Activated CD8-positive, alpha-beta T cell treated with anti-CD3 and anti-CD28 coated beads for 36 hours (primary cell): ENCODE measurements at regions of chr2 and their contacts with region 1.

Region 1: DNA sequence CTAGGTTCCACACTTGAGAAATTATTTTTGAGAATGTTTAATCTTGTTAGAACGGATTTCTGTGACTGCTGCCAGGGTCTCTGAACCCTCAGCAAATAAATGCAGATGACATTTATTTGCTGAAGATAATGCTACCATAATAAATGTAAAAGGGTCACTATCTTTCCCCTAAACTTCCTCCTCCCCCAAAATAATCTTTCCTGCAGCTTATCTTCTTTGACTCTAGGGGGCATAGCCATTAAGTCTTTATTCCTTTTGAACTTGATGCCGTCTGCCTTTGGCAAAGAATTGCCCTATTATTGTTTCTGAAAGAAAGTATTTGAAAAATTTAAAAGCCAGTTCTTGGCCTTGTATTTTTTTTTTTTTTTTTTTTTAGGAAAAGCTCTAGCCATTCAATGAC is 63.6 kb upstream of the ACSL3 start:
- DNase-seq: no peak
- ATAC-seq: peak; percentile 71
- H3K4me3 Mint-ChIP-seq: no peak overlapping the region
- H3K27ac Mint-ChIP-seq: no peak overlapping the region
- H3K4me1 Mint-ChIP-seq: no peaks in the 10 kb centered on the region
- H3K27me3 Mint-ChIP-seq: peaks cover 2% of the 10 kb centered on the region
- CTCF ChIP-seq: peak; percentile 58

Region 2: GRCh38 chr2:222813177-222813843 is 16.0 kb after region 1 on chr2:
- CTCF ChIA-PET with region 1: interaction called, 17 read pairs
- POLR2A ChIA-PET with region 1: no interaction called
- intact Hi-C with region 1: no loop called
- DNase-seq: peak; percentile 60
- ATAC-seq: peak; percentile 92
- H3K4me3 Mint-ChIP-seq: peak overlapping the region; percentile 34
- H3K27ac Mint-ChIP-seq: peak overlapping the region; percentile 91
- H3K4me1 Mint-ChIP-seq: peaks cover 21% of the 10 kb centered on the region
- H3K27me3 Mint-ChIP-seq: no peaks in the 10 kb centered on the region
- CTCF ChIP-seq: no peak

Region 3: DNA sequence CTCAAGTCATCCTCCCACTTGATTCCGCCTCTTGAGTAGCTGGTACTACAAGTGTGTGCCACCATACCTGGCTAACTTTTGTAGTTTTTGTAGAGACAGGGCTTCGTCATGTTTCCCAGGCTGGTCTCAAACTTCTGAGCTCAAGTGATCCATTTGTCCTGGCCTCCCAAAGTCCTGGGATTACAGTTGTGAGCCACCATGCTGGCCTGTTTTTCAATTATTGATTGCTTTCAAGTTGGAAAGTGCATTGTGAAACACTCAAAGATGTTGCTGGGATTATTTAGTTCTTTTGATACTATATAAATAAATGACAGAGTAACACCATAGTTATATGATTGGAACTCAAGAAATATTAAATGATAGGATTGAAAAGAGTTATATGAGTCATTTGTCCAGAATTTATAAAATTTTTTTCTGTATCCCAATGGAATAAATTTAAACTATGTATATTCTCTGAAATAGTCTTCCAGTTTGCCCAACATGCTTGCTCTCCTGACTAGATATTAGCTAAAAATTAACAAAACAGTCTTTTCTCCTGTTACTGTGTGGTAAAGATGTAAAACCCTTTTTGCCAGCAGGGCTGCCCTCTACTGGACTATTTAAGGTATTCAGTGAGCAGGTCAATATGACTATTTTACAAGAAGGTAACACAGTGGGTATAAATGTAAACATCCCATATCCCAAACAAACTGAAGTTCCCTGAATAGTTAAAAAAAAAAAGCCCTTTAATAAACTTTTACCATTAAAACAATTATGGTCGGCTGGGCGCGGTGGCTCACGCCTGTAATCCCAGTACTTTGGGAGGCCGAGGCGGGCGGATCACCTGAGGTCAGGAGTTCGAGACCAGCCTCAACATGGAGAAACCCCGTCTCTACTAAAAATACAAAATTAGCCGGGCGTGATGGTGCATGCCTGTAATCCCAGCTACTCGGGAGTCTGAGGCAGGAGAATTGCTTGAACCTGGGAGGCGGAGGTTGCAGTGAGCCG is 106.3 kb after region 1 on chr2:
- CTCF ChIA-PET with region 1: interaction called, 30 read pairs
- POLR2A ChIA-PET with region 1: no interaction called
- intact Hi-C with region 1: loop called (anchors 5 kb)
- DNase-seq: peak; percentile 61
- ATAC-seq: peak; percentile 80
- H3K4me3 Mint-ChIP-seq: no peak overlapping the region
- H3K27ac Mint-ChIP-seq: no peak overlapping the region
- H3K4me1 Mint-ChIP-seq: peaks cover 25% of the 10 kb centered on the region
- H3K27me3 Mint-ChIP-seq: no peaks in the 10 kb centered on the region
- CTCF ChIP-seq: peak; percentile 73